ENCODE measurements at regions of chr4 and their contacts with region 1.

Region 1: DNA sequence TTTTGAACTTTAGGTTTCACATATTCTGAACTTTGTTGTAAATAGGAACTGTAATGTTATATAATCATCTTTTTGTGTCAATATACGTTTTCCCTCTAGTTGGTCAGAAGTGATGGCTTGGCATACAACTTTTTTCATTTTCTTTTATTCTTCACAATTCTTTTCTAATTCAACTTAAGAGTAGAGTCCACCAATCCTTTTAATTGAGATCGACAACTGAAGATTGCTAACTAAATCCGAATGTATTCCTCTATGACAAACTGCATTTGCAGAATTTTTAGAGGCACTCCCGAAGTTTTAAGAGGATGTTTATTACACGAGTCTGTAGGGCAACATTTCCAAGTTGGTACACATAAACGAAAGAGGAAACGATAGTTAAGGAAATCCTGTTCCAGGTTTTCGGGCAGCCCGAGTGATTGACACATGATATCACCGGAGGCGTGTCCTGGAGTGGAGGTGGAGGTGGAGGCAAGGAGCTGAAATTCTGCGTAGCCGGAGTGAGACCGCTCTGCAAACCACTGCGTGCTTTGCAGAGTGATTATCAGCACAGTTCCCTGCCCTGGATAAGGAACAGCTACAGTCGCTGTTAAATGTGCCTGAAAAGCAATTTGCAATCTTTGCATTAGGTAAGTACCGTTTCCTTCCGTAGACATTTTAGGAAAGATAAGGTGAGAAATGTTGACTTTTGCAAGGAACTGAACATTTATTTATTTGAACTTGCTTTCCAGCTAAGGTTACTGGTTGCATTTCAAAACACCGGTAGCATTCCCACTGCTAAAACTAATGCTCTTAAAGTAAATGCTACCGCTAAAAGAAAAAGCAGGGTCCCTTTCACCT is at the start of gene SPRY1:
- DNase-seq: peak; percentile 90
- ATAC-seq: peak; percentile 63
- H3K4me3 Mint-ChIP-seq: peak within 1 kb of the TSS; percentile 81
- H3K27ac Mint-ChIP-seq: peak within 1 kb of the TSS; percentile 90
- H3K4me1 Mint-ChIP-seq: peaks cover 24% of the 10 kb centered on the region
- H3K27me3 Mint-ChIP-seq: peaks cover 5% of the 10 kb centered on the region
- total RNA-seq, gene SPRY1: 51.2 to 52.0 TPM

Region 2: GRCh38 chr4:122542411-122543236 is 853.9 kb before region 1 on chr4:
- CTCF ChIA-PET with region 1: no interaction called
- POLR2A ChIA-PET with region 1: no interaction called
- intact Hi-C with region 1: loop called in 1 of 2 experiments (anchors 5 kb)
- DNase-seq: no peak
- ATAC-seq: peak; percentile 63
- H3K4me3 Mint-ChIP-seq: peak overlapping the region; percentile 53
- H3K27ac Mint-ChIP-seq: peak overlapping the region; percentile 95
- H3K4me1 Mint-ChIP-seq: peaks cover 94% of the 10 kb centered on the region
- H3K27me3 Mint-ChIP-seq: no peaks in the 10 kb centered on the region

Region 3: GRCh38 chr4:123284168-123284567 is 112.4 kb before region 1 on chr4:
- CTCF ChIA-PET with region 1: no interaction called
- POLR2A ChIA-PET with region 1: no interaction called
- intact Hi-C with region 1: no loop called
- DNase-seq: no peak
- ATAC-seq: no peak
- H3K4me3 Mint-ChIP-seq: no peak overlapping the region
- H3K27ac Mint-ChIP-seq: peak overlapping the region; percentile 15
- H3K4me1 Mint-ChIP-seq: no peaks in the 10 kb centered on the region
- H3K27me3 Mint-ChIP-seq: no peaks in the 10 kb centered on the region

Region 4: DNA sequence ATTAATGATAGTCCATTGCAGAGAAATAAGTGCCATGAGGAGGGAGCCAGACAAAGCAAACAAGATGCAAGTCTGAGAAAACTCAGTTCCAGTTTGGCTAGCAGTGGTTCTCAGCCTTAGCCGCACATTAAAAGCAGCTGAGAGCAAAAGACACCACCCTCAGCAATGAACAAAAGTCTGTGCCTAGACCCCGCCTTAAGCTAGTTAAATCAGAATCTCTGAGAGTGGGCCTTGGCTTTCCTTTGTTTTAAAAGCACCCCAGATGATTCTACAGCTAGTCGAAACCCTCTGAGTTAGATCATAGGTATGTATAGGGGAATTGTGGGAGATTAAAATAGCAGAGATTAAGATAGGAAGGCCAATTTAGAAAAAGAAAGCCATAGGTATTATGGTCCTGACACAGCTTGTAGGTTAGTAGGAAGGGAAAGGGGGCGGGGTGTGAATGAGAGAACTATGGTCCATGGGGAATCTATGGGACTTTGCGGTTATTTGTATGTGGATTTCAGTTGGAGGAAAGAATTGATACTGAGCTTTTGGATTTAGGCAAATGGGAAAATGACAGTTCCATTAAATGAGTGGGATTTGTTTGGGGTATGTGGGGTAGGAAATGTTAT is 12.1 kb after region 1 on chr4:
- CTCF ChIA-PET with region 1: interaction called, 12 read pairs
- POLR2A ChIA-PET with region 1: interaction called, 3 read pairs
- intact Hi-C with region 1: loop called in 1 of 2 experiments (anchors 1 kb)
- DNase-seq: no peak
- ATAC-seq: no peak
- H3K4me3 Mint-ChIP-seq: no peak overlapping the region
- H3K27ac Mint-ChIP-seq: no peak overlapping the region
- H3K4me1 Mint-ChIP-seq: peaks cover 29% of the 10 kb centered on the region
- H3K27me3 Mint-ChIP-seq: no peaks in the 10 kb centered on the region

Region 5: DNA sequence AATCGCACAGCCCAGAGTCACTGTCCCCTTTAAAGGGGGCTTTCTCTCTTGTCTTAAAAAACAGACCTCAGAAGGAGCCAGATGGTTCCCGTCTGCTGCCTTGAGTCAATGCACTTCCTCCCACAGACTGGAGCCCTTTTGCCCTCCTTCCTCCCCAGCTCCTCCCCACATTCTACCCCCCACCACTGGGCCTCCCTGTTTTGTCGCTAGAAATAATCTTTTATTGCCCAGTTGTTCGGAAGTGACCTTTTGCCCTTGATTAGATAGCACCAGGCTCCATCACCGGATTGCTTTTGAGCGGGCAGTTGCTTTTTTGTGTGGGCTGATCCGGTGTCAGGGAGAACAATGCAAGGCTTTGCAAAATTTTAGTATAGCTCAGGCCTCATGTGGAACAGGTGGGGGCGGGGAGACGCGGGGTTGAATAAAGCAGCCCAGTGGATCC is 47.8 kb after region 1 on chr4:
- CTCF ChIA-PET with region 1: no interaction called
- POLR2A ChIA-PET with region 1: interaction called, 4 read pairs
- intact Hi-C with region 1: loop called (anchors 1 to 2 kb)
- DNase-seq: peak; percentile 66
- ATAC-seq: peak; percentile 77
- H3K4me3 Mint-ChIP-seq: peak overlapping the region; percentile 47
- H3K27ac Mint-ChIP-seq: peak overlapping the region; percentile 76
- H3K4me1 Mint-ChIP-seq: peaks cover 19% of the 10 kb centered on the region
- H3K27me3 Mint-ChIP-seq: no peaks in the 10 kb centered on the region

Region 6: DNA sequence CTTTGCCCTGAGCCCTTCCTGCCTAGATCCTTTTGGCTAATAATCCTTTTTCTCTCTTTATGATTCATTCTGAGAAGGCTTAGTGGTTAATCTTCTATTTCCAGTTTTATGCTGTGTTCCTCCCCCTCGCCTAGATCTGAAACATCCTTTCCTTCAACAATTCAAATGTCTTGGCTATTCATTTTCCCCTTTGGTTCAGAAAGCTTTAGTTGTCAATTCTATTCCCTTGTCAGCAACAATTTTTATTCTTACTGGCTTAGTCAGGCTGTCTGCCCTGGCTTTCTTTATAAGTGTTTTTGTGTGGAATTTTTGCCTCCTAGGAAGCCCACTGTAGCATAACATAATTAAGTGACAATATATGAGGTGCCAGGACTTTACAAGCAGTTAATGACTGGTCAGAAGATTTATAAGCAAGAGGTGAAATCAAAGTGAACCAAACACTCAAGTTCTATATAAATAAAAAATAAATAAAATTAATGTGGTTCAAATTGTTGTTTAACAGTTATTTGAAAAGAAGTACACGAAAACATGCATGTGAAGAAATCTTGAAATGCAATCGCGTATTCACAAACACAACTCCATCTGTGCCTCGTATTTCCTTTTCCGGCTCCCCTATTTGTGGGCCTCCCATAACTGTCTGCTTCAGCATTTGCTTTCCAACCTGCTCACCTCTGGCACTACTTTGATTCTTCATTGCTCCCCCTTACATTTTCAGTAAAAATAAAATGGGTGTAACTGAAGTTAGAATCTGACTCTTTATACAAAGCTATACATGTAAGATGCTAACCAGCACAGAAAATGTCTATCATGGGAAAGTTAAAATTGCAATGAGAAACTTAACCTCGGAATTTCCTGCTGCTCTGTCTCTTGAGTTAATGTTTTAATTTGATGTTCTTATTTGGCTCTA is 235.5 kb after region 1 on chr4:
- CTCF ChIA-PET with region 1: no interaction called
- POLR2A ChIA-PET with region 1: no interaction called
- intact Hi-C with region 1: no loop called
- DNase-seq: no peak
- ATAC-seq: peak; percentile 19
- H3K4me3 Mint-ChIP-seq: no peak overlapping the region
- H3K27ac Mint-ChIP-seq: no peak overlapping the region
- H3K4me1 Mint-ChIP-seq: peaks cover 7% of the 10 kb centered on the region
- H3K27me3 Mint-ChIP-seq: peaks cover 2% of the 10 kb centered on the region

Region 7: DNA sequence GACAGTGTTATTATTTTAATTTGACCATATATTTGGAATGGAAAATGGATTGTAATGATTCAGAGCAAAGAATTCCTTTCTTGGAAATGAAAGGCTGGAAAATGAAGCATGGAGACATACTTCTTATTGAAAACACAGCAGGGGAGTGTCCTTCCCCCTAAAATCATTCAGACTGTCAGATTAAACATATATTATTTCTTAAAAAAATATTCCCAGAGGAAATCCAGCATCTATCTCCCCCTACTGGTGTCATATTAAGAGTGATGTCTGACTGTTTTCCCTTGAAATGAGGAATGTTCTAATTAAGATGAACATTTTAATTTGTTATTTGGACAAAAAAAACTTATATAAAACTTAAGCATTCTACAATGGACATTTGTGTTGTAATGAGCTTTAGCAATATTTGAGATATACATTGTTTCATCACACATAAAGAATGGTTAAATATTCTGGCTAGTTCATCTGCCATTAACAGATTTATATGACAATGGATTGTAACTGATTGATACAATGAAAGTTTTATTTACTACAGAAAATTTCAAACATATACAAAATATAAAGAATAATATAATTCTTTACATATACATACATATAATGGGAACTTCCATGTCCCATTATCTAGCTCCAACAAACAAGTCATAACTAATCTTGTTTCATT is 264.7 kb after region 1 on chr4:
- CTCF ChIA-PET with region 1: interaction called, 6 read pairs
- POLR2A ChIA-PET with region 1: no interaction called
- intact Hi-C with region 1: loop called (anchors 2 to 5 kb)
- DNase-seq: no peak
- ATAC-seq: no peak
- H3K4me3 Mint-ChIP-seq: no peak overlapping the region
- H3K27ac Mint-ChIP-seq: no peak overlapping the region
- H3K4me1 Mint-ChIP-seq: peaks cover 15% of the 10 kb centered on the region
- H3K27me3 Mint-ChIP-seq: peaks cover 17% of the 10 kb centered on the region

Region 8: DNA sequence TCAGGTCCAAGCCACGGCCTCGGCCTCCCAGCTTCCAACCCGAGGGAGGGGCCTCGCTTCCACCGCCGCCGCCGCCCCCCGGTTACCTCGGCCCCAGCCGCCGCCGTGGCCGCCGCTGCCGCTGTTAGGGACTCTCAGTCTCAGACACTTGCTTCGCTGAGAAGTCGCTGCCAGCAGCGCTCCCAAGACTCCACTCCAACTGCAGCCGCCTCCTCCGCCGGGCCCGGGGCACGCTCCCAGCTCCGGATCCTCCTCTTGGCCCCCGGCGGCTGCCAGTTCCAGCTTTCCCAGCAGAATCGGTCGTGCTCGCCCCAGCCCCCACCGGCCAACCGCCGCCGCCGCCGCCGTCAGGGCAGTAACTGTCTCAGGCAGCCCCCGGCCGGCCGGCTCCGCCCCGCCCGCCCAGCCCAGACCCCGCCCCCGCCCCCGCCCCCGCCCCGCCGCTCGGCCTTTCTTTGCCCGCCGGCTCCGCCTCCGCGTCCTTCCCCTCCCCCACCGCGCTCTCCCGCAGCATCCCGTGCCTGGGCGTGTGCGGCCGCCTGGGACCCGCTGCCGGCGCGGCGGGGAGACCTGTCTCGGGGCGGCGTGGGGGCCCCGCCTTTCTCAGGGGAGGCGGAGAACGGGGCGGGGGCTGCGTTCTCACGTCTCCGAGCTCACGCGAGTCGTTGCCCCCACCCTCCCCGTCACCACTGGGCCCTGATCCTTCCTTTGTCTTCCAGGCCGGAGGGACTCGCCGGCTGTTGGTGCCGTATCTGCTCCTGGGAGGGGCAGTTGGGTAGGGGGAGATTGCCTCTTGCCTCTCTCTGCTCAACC is 1316.1 kb after region 1 on chr4 and contains the start of gene ANKRD50:
- CTCF ChIA-PET with region 1: no interaction called
- POLR2A ChIA-PET with region 1: no interaction called
- intact Hi-C with region 1: loop called in 1 of 2 experiments (anchors 5 kb)
- DNase-seq: peak; percentile 79
- ATAC-seq: peak; percentile 81
- H3K4me3 Mint-ChIP-seq: no peak within 1 kb of the TSS
- H3K27ac Mint-ChIP-seq: peak within 1 kb of the TSS; percentile 75
- H3K4me1 Mint-ChIP-seq: peaks cover 6% of the 10 kb centered on the region
- H3K27me3 Mint-ChIP-seq: no peaks in the 10 kb centered on the region
- total RNA-seq, gene ANKRD50: 0.42 to 0.59 TPM

Measured in activated CD4-positive, alpha-beta T cell treated with anti-CD3 and anti-CD28 coated beads for 36 hours (primary cell).